GM12878 (cell line): ENCODE measurements at regions of chr5 and their contacts with region 1.

Region 1: DNA sequence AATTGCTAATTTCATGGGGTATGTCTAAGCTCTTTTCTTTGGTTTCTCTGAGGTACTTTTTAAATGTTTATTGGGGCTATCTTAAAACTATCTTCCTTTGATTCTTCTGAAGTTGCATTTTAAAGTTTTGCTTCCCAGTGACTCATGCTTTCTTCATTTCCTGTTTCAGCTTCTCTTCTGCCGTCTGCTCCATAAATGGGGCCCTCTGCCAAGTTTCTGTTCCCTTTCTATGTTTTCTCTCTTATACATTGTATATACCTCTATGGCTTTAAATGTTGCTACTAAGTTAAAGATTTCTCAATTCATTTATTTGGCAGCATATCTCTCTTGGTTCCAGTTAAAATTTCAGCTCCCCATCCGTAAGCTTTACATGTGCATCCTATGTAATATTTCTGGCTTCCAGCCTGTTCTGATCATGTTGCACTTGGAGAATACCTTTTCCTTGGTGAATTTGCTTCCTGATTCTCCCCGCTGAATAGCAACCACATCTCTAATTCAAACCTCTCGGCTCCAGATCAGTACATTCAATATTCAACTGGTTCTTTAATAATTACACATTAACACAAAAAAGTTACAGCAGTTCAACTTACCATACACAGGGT is 125.3 kb downstream of the ST8SIA4 start:
- DNase-seq: peak; percentile 80
- ATAC-seq: peak; percentile 72
- H3K4me3 ChIP-seq: peak overlapping the region; percentile 20; the same call in 1 of the 2 replicates
- H3K27ac ChIP-seq: peak overlapping the region; percentile 55
- H3K4me1 ChIP-seq: peaks cover 27% of the 10 kb centered on the region
- H3K27me3 ChIP-seq: no peaks in the 10 kb centered on the region
- CTCF ChIP-seq: no peak
- EP300 ChIP-seq: peak; percentile 73 to 94
- POLR2A ChIP-seq: no peak
- RAD21 ChIP-seq: no peak

Region 2: GRCh38 chr5:100623719-100624118 is 154.1 kb before region 1 on chr5:
- CTCF ChIA-PET with region 1: no interaction called
- POLR2A ChIA-PET with region 1: no interaction called
- RAD21 ChIA-PET with region 1: interaction called, 3 read pairs
- SMC1A ChIA-PET with region 1: interaction called, 5 read pairs
- in situ Hi-C with region 1: no loop called
- intact Hi-C with region 1: loop called (anchors 5 kb)
- DNase-seq: no peak
- ATAC-seq: peak; percentile 96
- H3K4me3 ChIP-seq: no peak overlapping the region
- H3K27ac ChIP-seq: no peak overlapping the region
- H3K4me1 ChIP-seq: no peaks in the 10 kb centered on the region
- H3K27me3 ChIP-seq: no peaks in the 10 kb centered on the region
- CTCF ChIP-seq: peak; percentile 62 to 67 (median 62)
- EP300 ChIP-seq: no peak
- POLR2A ChIP-seq: no peak
- RAD21 ChIP-seq: peak; percentile 92

Region 3: GRCh38 chr5:100818340-100818739 is 40.6 kb after region 1 on chr5:
- CTCF ChIA-PET with region 1: interaction called, 15 read pairs
- POLR2A ChIA-PET with region 1: interaction called, 3 read pairs
- RAD21 ChIA-PET with region 1: interaction called, 34 read pairs
- SMC1A ChIA-PET with region 1: interaction called, 22 read pairs
- in situ Hi-C with region 1: no loop called
- intact Hi-C with region 1: no loop called
- DNase-seq: no peak
- ATAC-seq: peak; percentile 67
- H3K4me3 ChIP-seq: no peak overlapping the region
- H3K27ac ChIP-seq: no peak overlapping the region; the same call in 1 of the 2 replicates
- H3K4me1 ChIP-seq: peaks cover 4% of the 10 kb centered on the region; the same call in 1 of the 2 replicates
- H3K27me3 ChIP-seq: no peaks in the 10 kb centered on the region
- CTCF ChIP-seq: no peak
- EP300 ChIP-seq: no peak
- POLR2A ChIP-seq: no peak
- RAD21 ChIP-seq: no peak

Region 4: GRCh38 chr5:100840384-100840783 is 62.6 kb after region 1 on chr5:
- CTCF ChIA-PET with region 1: interaction called, 24 read pairs
- POLR2A ChIA-PET with region 1: interaction called, 7 read pairs
- RAD21 ChIA-PET with region 1: interaction called, 45 read pairs
- SMC1A ChIA-PET with region 1: interaction called, 85 read pairs
- in situ Hi-C with region 1: no loop called
- intact Hi-C with region 1: loop called (anchors 5 kb)
- DNase-seq: peak; percentile 81
- ATAC-seq: peak; percentile 84
- H3K4me3 ChIP-seq: no peak overlapping the region
- H3K27ac ChIP-seq: peak overlapping the region; percentile 85
- H3K4me1 ChIP-seq: peaks cover 28% of the 10 kb centered on the region
- H3K27me3 ChIP-seq: no peaks in the 10 kb centered on the region
- CTCF ChIP-seq: 0 out of 6 replicates have a peak, but pooled peaks of 1 of the 3 experiments have one; percentile 9
- EP300 ChIP-seq: peak; percentile 84 to 86; a peak in 3 of 4 replicates
- POLR2A ChIP-seq: no peak
- RAD21 ChIP-seq: peak; percentile 32; the same call in 1 of the 2 replicates

Region 5: GRCh38 chr5:100890461-100891008 is 112.8 kb after region 1 on chr5:
- CTCF ChIA-PET with region 1: interaction called, 232 read pairs
- POLR2A ChIA-PET with region 1: interaction called, 4 read pairs
- RAD21 ChIA-PET with region 1: interaction called, 345 read pairs
- SMC1A ChIA-PET with region 1: interaction called, 389 read pairs
- in situ Hi-C with region 1: no loop called
- intact Hi-C with region 1: no loop called
- DNase-seq: peak; percentile 64
- ATAC-seq: peak; percentile 73
- H3K4me3 ChIP-seq: peak overlapping the region; percentile 58
- H3K27ac ChIP-seq: peak overlapping the region; percentile 87
- H3K4me1 ChIP-seq: peaks cover 15% of the 10 kb centered on the region; the same call in 1 of the 2 replicates
- H3K27me3 ChIP-seq: no peaks in the 10 kb centered on the region
- CTCF ChIP-seq: no peak
- EP300 ChIP-seq: peak; percentile 46 to 57; a peak in 2 of 4 replicates
- POLR2A ChIP-seq: no peak
- RAD21 ChIP-seq: 0 out of 2 replicates have a peak, but pooled peaks have one; percentile 2

Region 6: DNA sequence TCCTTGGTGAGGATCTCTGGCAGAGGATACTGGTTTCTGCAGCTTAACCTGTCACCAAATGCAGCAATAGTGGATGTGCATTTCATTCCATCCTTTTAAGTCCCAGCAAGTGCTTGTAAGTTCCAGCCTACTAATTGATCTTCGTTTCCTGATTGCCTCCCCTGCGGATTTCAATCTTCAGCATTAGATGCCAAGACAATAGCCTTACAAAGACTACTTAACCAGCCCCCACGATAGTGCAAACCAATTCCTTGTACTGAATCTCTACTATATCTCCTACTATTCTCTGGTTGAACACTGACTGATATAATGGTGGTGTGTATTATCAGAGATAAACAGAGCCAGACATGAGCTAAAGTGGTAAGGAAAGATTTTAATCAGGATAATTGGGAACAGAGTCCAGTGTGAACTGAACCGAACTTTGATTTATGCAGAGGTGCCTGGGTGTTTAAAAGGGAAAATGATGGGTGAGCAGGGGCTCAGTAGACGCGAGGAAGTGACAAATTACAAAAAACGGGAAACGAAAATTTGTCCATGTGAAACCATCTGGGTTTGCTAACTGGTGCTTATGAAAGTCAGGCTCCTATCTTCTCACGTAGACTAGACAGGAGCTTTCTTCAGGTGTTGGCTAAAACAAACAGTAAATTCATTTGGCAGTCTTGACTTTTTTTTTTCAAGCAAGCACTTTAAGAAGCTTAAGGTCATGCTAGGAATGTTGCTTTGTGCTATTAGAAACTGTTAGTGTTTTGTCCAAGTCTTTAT is 232.2 kb after region 1 on chr5:
- CTCF ChIA-PET with region 1: interaction called, 12 read pairs
- POLR2A ChIA-PET with region 1: no interaction called
- RAD21 ChIA-PET with region 1: interaction called, 5 read pairs
- SMC1A ChIA-PET with region 1: interaction called, 5 read pairs
- in situ Hi-C with region 1: no loop called
- intact Hi-C with region 1: no loop called
- DNase-seq: peak; percentile 39
- ATAC-seq: peak; percentile 94
- H3K4me3 ChIP-seq: no peak overlapping the region
- H3K27ac ChIP-seq: peak overlapping the region; percentile 50; the same call in 1 of the 2 replicates
- H3K4me1 ChIP-seq: peaks cover 8% of the 10 kb centered on the region
- H3K27me3 ChIP-seq: no peaks in the 10 kb centered on the region
- CTCF ChIP-seq: no peak
- EP300 ChIP-seq: 0 out of 4 replicates have a peak, but pooled peaks of 1 of the 2 experiments have one; percentile 27
- POLR2A ChIP-seq: no peak
- RAD21 ChIP-seq: no peak